Colonic mucosa (tissue), 4 donors: ENCODE measurements at regions of chr2 and their contacts with region 1.

Region 1: DNA sequence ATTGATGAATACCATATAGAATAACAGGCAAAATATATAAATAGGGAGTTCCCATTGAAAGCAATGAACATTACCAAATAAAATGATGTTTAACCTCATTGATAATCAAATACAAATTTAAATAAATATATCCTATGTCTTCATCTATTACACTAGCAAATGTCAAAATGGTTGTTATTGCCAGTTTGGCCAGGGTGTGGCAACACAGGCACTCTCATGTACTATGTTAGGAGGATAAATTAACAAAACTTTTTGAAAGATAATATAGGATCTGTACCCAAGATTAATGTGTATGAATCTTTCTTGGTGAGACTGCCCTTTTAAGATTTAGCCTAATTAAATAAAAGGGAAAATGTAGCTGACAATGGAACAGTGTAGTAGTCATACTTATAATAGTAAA is 659.3 kb downstream of the ERBB4 start:
- DNase-seq: no peak
- H3K4me3 ChIP-seq: no peak overlapping the region
- H3K27ac ChIP-seq: no peak overlapping the region
- H3K4me1 ChIP-seq: no peaks in the 10 kb centered on the region
- H3K27me3 ChIP-seq: no peaks in the 10 kb centered on the region
- CTCF ChIP-seq: no peak

Region 2: DNA sequence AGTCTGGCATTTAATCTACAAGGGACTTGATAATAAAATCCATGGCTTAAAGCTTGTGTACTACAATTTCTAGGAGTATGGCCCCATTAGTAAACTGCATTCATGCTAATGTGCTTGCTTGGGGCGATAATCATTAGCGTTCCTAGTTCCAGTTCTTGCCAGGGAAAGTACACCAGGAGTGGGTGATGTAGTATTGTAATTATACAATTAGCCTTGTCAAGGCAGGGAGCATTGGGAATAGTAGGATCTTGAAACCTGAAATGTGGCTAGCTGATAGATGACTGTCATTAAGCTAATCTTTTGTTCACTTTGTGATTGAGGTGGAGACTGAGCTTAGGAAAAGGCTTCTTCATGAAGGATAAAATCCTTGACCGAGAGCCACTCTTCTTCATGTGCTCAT is 333.7 kb before region 1 on chr2:
- intact Hi-C with region 1: no loop called
- DNase-seq: no peak
- H3K4me3 ChIP-seq: no peak overlapping the region
- H3K27ac ChIP-seq: no peak overlapping the region
- H3K4me1 ChIP-seq: no peaks in the 10 kb centered on the region
- H3K27me3 ChIP-seq: no peaks in the 10 kb centered on the region
- CTCF ChIP-seq: no peak

Region 3: GRCh38 chr2:211802666-211803065 is 76.7 kb before region 1 on chr2:
- intact Hi-C with region 1: no loop called
- DNase-seq: no peak
- H3K4me3 ChIP-seq: no peak overlapping the region
- H3K27ac ChIP-seq: no peak overlapping the region
- H3K4me1 ChIP-seq: no peaks in the 10 kb centered on the region
- H3K27me3 ChIP-seq: no peaks in the 10 kb centered on the region
- CTCF ChIP-seq: no peak

Region 4: DNA sequence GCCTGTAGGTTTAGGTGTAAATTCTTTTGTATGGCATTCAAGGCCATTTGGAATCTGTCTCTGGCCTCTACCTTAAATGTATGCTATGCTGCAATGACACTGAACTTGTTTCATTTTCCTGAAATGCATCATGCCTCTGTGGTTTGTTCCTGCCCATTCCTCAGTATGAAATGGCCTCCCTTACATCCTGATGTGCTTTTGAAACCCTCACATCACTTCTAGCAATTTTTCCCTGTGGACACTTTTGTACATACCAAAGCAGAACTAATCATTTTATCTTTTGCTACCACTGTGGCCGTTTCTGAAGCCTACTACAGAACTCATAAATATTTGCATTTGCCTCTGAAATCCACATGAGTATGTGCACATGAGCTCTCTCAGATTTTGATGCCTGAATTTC is 102.1 kb after region 1 on chr2:
- intact Hi-C with region 1: no loop called
- DNase-seq: no peak
- H3K4me3 ChIP-seq: no peak overlapping the region
- H3K27ac ChIP-seq: no peak overlapping the region
- H3K4me1 ChIP-seq: no peaks in the 10 kb centered on the region
- H3K27me3 ChIP-seq: no peaks in the 10 kb centered on the region
- CTCF ChIP-seq: no peak

Region 5: DNA sequence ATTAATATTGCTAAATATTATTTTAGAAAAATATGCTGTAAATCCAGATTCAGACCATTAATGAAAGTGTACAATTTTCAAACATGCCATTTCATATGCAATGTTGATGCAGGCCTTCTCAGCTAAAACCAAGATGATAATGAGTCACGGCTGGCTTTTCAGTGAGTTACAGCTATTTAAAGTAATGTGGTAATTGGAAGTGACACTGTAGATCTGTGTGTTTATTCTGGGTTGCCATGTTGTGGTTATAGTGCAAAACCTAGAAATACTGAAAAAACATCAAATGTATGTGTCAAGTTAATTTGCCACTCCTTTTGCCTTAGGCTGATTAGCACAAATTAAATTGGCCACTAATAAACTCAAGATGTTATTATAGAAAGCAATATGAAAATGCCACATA is 152.7 kb after region 1 on chr2:
- intact Hi-C with region 1: no loop called
- DNase-seq: no peak
- H3K4me3 ChIP-seq: no peak overlapping the region
- H3K27ac ChIP-seq: no peak overlapping the region
- H3K4me1 ChIP-seq: no peaks in the 10 kb centered on the region
- H3K27me3 ChIP-seq: no peaks in the 10 kb centered on the region
- CTCF ChIP-seq: no peak

Region 6: DNA sequence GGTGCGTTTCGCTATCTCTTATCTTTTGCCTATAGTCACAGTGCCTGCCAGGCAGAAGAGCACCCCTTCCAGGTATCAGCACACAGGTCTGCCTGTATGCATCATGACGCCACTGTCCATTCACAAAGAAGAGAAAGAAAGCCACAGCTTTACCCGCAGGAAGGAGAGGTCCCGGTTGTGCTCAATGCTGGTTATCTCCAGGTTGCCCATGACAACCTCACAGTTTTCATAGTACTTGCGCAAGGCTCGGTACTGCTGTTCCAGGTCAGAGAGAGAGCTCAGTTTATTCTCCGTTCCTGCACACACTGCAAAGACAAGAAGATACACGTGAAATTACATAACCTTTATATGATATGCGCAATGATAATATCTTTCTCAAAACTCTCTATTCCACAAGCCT is 245.3 kb after region 1 on chr2:
- intact Hi-C with region 1: loop called (anchors 5 kb)
- DNase-seq: no peak
- H3K4me3 ChIP-seq: no peak overlapping the region
- H3K27ac ChIP-seq: no peak overlapping the region
- H3K4me1 ChIP-seq: no peaks in the 10 kb centered on the region
- H3K27me3 ChIP-seq: no peaks in the 10 kb centered on the region
- CTCF ChIP-seq: no peak